Mammary epithelial cell (primary cell): ENCODE measurements at regions of chr1 and their contacts with region 1.

Region 1: GRCh38 chr1:210328746-210329503 is at the start of gene HHAT:
- DNase-seq: peak; percentile 81
- H3K4me3 ChIP-seq: peak within 1 kb of the TSS; percentile 68 to 88 (median 69)
- H3K27ac ChIP-seq: peak within 1 kb of the TSS; percentile 84
- H3K4me1 ChIP-seq: peaks cover 30% of the 10 kb centered on the region
- H3K27me3 ChIP-seq: no peaks in the 10 kb centered on the region
- CTCF ChIP-seq: no peak
- total RNA-seq, gene HHAT: 1.8 to 9.8 TPM

Region 2: GRCh38 chr1:210233216-210234020 is 95.5 kb before region 1 on chr1:
- CTCF ChIA-PET with region 1: no interaction called
- dilution Hi-C with region 1: loop called (anchors 5 kb)
- in situ Hi-C with region 1: no loop called
- intact Hi-C with region 1: no loop called
- DNase-seq: peak; percentile 80
- H3K4me3 ChIP-seq: peak overlapping the region; percentile 60 to 82 (median 78)
- H3K27ac ChIP-seq: peak overlapping the region; percentile 42
- H3K4me1 ChIP-seq: peaks cover 9% of the 10 kb centered on the region
- H3K27me3 ChIP-seq: no peaks in the 10 kb centered on the region
- CTCF ChIP-seq: no peak

Region 3: DNA sequence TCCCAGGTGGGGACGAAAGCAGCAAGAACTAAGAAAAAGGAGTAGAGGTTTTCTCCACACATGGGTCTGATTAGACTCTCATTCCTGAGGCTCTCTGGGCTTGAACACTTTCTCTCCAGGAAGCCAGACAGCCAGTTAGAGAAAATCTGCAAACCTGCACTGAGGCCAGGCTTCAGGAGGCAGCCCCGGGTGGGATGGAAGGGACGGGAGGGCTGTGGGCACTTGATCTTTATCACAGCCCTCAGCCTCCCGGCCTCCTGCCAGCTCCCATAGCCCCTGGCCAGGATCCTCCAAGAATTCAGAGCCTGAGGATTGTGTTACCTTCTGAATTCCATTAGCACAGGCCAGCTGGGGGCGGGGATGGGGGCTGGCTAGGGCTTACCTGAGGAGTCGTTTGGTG is 56.3 kb before region 1 on chr1:
- CTCF ChIA-PET with region 1: no interaction called
- dilution Hi-C with region 1: loop called (anchors 5 kb)
- in situ Hi-C with region 1: no loop called
- intact Hi-C with region 1: no loop called
- DNase-seq: no peak
- H3K4me3 ChIP-seq: no peak overlapping the region
- H3K27ac ChIP-seq: no peak overlapping the region
- H3K4me1 ChIP-seq: no peaks in the 10 kb centered on the region
- H3K27me3 ChIP-seq: no peaks in the 10 kb centered on the region
- CTCF ChIP-seq: no peak

Region 4: DNA sequence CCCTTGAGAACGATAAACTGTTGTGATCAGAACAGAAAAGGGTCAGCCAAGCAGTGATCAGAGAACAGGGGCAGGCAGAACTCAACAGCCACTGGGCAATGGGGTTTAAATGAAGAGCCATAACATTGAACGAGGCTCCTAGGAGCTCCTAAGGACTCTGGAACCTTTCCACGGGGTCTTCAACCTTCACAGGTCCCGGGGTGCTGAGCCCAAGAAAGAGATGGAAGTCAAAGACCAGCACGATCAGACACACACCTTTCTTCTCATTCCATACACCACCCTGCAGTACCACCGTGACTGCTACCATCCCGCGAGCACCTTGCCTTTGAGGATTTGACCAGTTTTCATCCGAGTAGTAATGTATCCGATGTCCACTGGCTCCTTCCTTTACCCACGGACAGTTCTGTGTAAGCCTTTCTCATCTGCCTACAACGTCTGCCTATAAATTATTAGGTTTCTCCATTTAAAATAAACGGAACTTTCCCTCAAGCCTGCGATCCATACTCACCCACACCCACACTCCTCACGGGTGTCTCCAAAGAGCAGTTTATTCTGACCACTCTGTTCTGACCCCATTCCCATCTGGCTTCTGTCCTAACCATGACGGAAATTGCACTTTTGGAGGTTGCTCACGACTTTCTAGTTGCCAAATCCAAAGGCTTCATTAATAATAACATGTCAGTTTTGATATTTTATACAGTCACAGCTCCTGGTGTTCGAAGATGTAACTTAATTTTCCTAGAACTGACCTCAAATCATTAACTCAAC is 17.0 kb before region 1 on chr1:
- CTCF ChIA-PET with region 1: no interaction called
- dilution Hi-C with region 1: no loop called
- in situ Hi-C with region 1: no loop called
- intact Hi-C with region 1: no loop called
- DNase-seq: no peak
- H3K4me3 ChIP-seq: no peak overlapping the region
- H3K27ac ChIP-seq: no peak overlapping the region
- H3K4me1 ChIP-seq: peaks cover 5% of the 10 kb centered on the region
- H3K27me3 ChIP-seq: no peaks in the 10 kb centered on the region
- CTCF ChIP-seq: no peak

Region 5: GRCh38 chr1:210360852-210361477 is 32.0 kb after region 1 on chr1:
- CTCF ChIA-PET with region 1: interaction called, 3 read pairs
- dilution Hi-C with region 1: no loop called
- in situ Hi-C with region 1: no loop called
- intact Hi-C with region 1: loop called (anchors 2 kb)
- DNase-seq: peak; percentile 43
- H3K4me3 ChIP-seq: no peak overlapping the region
- H3K27ac ChIP-seq: no peak overlapping the region
- H3K4me1 ChIP-seq: peaks cover 24% of the 10 kb centered on the region
- H3K27me3 ChIP-seq: no peaks in the 10 kb centered on the region
- CTCF ChIP-seq: peak; percentile 76 to 82

Region 6: DNA sequence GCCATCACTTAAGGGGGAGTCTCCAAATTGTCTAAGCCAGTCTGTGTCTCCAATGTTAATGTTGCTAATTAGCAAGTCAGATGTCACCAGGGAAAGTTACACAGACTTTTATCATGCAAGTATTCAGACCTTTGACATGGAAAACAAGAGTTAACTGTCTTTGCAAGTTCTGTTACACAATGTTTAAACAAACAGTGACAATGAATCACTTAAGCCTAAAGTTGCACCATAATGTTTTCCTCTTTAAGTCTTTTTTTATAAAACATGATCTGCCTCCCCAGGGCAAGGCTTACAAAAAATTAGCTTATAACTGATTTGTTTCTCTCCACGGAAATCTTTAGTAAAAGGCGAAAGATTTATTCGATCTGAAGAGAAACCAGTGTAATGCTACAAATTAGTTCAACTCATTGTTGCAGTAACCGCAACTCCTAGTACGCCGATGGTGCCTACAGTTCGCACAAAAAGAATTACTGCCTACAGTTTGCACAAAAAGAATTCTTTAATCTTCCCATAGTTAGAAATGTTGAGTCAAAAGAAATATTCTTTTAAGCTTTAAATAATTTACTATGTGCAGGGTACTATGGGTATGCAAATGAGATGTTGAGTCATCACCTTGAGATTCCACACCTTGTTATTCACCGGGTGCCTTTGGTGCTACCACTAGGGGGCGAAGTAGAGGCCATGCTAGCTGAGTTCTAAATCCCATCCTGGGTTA is 45.1 kb after region 1 on chr1:
- CTCF ChIA-PET with region 1: no interaction called
- dilution Hi-C with region 1: no loop called
- in situ Hi-C with region 1: no loop called
- intact Hi-C with region 1: loop called (anchors 5 kb)
- DNase-seq: peak; percentile 100
- H3K4me3 ChIP-seq: no peak overlapping the region
- H3K27ac ChIP-seq: peak overlapping the region; percentile 99
- H3K4me1 ChIP-seq: peaks cover 4% of the 10 kb centered on the region
- H3K27me3 ChIP-seq: no peaks in the 10 kb centered on the region
- CTCF ChIP-seq: peak; percentile 97 to 99